ENCODE measurements at regions of chr15 and their contacts with region 1.

Region 1: GRCh38 chr15:65054333-65055200 is 9.4 kb downstream of the SLC51B start:
- DNase-seq: no peak
- H3K4me3 ChIP-seq: no peak overlapping the region
- H3K27ac ChIP-seq: peak overlapping the region; percentile 75 to 98 (median 96)
- H3K4me1 ChIP-seq: peaks cover 26 to 70% (median 67%) of the 10 kb centered on the region in 4 donors
- H3K27me3 ChIP-seq: no peaks in the 10 kb centered on the region
- CTCF ChIP-seq: peak; percentile 91 to 97 (median 93)
- EP300 ChIP-seq: no peak
- POLR2A ChIP-seq: no peak

Region 2: GRCh38 chr15:65077981-65078352 is 23.4 kb after region 1 on chr15:
- intact Hi-C with region 1: loop called (anchors 2 kb)
- DNase-seq: no peak
- H3K4me3 ChIP-seq: peak overlapping the region in 3 of 4 donors; percentile 4 to 18 (median 15)
- H3K27ac ChIP-seq: peak overlapping the region in 1 of 4 donors; percentile 23
- H3K4me1 ChIP-seq: peaks cover 44 to 66% (median 50%) of the 10 kb centered on the region in 4 donors
- H3K27me3 ChIP-seq: peaks cover 0 to 16% (median 0%) of the 10 kb centered on the region in 4 donors
- CTCF ChIP-seq: peak; percentile 58 to 70 (median 69)
- EP300 ChIP-seq: no peak
- POLR2A ChIP-seq: no peak

Region 3: GRCh38 chr15:65101411-65101890 is 46.9 kb after region 1 on chr15:
- intact Hi-C with region 1: loop called (anchors 2 kb)
- DNase-seq: no peak
- H3K4me3 ChIP-seq: no peak overlapping the region
- H3K27ac ChIP-seq: peak overlapping the region in 2 of 4 donors; percentile 16 to 23
- H3K4me1 ChIP-seq: peaks cover 0 to 27% (median 27%) of the 10 kb centered on the region in 4 donors
- H3K27me3 ChIP-seq: no peaks in the 10 kb centered on the region
- CTCF ChIP-seq: peak; percentile 79 to 89 (median 88)
- EP300 ChIP-seq: no peak
- POLR2A ChIP-seq: no peak

Measured in esophagus muscularis mucosa (tissue), 4 donors.